ENCODE measurements at regions of chr5 and their contacts with region 1.

Region 1: DNA sequence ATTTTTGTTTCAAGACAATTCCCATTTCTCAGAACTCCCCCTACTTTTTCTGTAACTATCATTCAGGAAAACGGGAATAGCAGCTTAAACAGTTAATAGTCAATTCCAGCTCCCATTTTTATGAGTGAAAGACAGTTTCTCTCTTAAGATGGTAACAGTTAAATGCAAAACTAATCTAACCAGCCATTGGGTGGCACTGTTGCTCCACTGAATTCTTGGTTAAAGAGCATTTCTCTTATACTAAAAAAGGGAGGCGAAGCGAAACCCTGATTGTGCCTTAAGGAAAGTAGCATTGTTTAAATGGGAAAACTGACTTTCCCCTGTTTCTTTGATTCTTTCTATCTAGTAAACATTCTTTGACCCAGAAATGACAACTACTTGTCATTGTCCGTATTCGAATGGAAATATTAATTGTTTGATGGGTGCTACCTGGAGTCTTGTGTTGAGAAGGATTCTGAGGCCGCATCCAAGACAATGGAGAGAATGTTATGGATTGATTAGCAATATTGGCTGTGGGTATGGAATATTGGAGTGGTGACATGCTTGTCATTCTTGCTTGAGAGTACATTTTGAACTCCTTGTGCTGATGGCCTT is 507.8 kb downstream of the MAT2B start:
- DNase-seq: peak; percentile 57
- H3K4me3 ChIP-seq: no peak overlapping the region
- H3K27ac ChIP-seq: no peak overlapping the region
- H3K27me3 ChIP-seq: no peaks in the 10 kb centered on the region
- CTCF ChIP-seq: peak; percentile 70

Region 2: GRCh38 chr5:163564321-163564938 is 448.7 kb before region 1 on chr5:
- CTCF ChIA-PET with region 1: interaction called, 22 read pairs
- POLR2A ChIA-PET with region 1: no interaction called
- DNase-seq: peak; percentile 24
- H3K4me3 ChIP-seq: no peak overlapping the region
- H3K27ac ChIP-seq: no peak overlapping the region
- H3K27me3 ChIP-seq: no peaks in the 10 kb centered on the region
- CTCF ChIP-seq: peak; percentile 88

Region 3: DNA sequence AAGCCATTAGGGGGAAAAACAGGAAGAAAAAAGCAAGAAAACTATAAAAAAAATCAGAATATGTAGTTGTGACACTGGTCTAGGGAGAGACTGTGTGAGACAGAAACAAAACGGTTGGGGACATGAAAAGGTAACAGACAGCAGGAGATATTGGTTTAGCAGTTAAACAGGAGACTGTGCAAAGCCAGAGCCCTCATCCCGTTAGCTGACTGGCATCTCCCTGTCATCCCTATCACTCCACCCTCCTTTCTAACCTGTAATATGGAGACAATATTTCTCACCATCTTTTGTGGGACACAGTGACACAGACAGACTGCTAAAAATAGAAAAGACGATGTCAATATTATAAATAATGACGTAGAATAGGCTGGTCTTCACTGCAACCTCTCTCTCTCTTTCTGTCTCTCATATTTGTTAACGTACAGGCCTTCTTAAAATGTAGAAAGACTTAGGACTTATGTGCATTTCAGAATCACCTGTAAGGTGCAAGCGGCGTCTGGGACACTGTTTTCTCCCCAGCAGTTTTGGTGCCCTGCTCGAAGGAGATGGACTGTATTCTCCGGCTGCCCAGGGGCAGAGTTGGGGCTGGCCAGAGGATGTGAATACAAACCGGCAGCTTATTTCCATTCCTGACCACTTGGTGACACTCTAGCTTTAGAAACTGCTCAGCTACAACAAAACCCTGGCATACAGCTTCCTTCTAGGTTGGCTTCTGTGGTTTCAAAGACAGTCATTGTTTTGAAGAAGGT is 317.2 kb before region 1 on chr5:
- CTCF ChIA-PET with region 1: interaction called, 89 read pairs
- POLR2A ChIA-PET with region 1: no interaction called
- DNase-seq: peak; percentile 69
- H3K4me3 ChIP-seq: no peak overlapping the region
- H3K27ac ChIP-seq: no peak overlapping the region
- H3K27me3 ChIP-seq: no peaks in the 10 kb centered on the region
- CTCF ChIP-seq: peak; percentile 85

Region 4: GRCh38 chr5:164002628-164003027 is 10.5 kb before region 1 on chr5:
- CTCF ChIA-PET with region 1: interaction called, 14 read pairs
- POLR2A ChIA-PET with region 1: no interaction called
- DNase-seq: no peak
- H3K4me3 ChIP-seq: no peak overlapping the region
- H3K27ac ChIP-seq: no peak overlapping the region
- H3K27me3 ChIP-seq: no peaks in the 10 kb centered on the region
- CTCF ChIP-seq: no peak

Region 5: DNA sequence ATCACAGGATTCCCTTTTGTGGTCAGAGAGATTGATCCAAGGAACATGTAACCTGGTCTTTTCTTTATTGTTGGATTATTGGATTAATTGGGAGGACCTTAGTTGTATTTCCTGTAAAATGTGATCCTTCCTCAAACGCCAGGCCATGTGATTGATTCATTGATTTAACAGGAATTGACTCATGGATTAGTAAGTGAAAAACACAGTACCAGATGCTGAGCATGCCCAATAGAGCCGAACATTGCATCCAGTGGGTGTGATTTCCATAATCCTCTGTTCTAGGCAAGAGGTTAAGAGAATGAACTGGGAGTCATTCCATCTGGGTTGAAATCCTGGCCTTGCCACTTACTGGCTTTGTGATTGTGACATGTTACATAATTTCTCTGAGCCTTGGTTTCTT is 14.6 kb after region 1 on chr5:
- CTCF ChIA-PET with region 1: interaction called, 21 read pairs
- POLR2A ChIA-PET with region 1: no interaction called
- DNase-seq: no peak
- H3K4me3 ChIP-seq: no peak overlapping the region
- H3K27ac ChIP-seq: no peak overlapping the region
- H3K27me3 ChIP-seq: no peaks in the 10 kb centered on the region
- CTCF ChIP-seq: no peak

Region 6: DNA sequence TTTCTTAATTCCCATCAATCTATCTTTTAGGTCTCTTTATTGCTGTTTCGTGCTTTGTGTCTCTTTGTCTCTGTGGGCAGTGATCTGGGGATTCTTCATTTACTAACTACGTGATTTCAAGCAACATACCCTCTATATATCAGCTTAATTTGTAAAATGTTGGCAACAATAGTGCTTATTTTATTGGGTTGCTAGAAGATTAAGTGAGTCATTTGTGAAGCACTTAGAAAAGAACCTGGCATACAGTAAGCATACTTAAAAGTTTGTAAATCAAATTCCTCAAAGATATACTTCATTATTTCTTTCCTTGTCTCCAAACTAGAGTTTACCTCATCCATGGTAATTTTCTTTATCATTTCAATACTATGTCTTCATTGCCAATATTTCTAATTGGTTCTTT is 161.9 kb after region 1 on chr5:
- CTCF ChIA-PET with region 1: no interaction called
- POLR2A ChIA-PET with region 1: no interaction called
- DNase-seq: no peak
- H3K4me3 ChIP-seq: no peak overlapping the region
- H3K27ac ChIP-seq: no peak overlapping the region
- H3K27me3 ChIP-seq: no peaks in the 10 kb centered on the region
- CTCF ChIP-seq: no peak

Region 7: DNA sequence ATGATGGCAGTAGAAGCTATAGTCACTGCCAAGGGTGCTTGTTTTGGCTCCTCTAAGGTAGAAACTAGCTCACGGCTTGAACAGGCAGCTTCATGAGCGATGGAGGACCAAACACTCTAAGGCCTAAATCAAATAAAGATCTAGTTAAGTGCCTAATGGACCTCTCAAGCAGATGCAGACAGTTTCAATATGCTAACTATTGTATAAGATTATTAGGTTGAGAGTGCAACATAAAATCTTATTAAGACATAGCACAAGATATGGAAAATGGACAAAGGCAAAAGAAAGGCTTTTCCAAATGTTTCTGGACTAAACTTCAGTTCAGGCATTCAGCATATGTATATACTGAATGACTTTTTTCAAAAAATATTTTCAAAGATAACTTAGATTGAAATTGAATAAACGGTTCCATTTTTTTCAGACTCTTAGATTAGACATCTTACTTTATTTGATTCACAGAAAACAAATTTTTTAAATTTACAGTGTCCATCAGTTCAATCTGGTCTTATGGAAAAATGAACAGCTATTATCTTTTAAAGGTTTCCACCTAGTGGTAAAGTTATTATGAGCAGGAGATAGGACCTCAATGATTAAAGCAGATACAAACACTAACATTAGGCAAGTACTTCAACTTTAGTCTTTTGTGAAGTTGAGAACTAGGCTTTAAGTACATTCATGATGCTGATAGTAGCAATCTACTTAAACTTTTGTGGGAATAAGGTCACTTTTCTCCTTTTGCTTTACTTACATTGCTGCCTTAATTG is 659.9 kb after region 1 on chr5:
- CTCF ChIA-PET with region 1: interaction called, 10 read pairs
- POLR2A ChIA-PET with region 1: no interaction called
- DNase-seq: no peak
- H3K4me3 ChIP-seq: no peak overlapping the region
- H3K27ac ChIP-seq: no peak overlapping the region
- H3K27me3 ChIP-seq: no peaks in the 10 kb centered on the region
- CTCF ChIP-seq: peak; percentile 45

Region 8: GRCh38 chr5:165209086-165209727 is 1196.0 kb after region 1 on chr5:
- CTCF ChIA-PET with region 1: interaction called, 12 read pairs
- POLR2A ChIA-PET with region 1: no interaction called
- DNase-seq: no peak
- H3K4me3 ChIP-seq: no peak overlapping the region
- H3K27ac ChIP-seq: no peak overlapping the region
- H3K27me3 ChIP-seq: no peaks in the 10 kb centered on the region
- CTCF ChIP-seq: peak; percentile 73